ENCODE measurements at regions of chr17 and their contacts with region 1.

Region 1: GRCh38 chr17:3859940-3860339 is 13.9 kb upstream of the NCBP3 start:
- DNase-seq: no peak
- H3K4me3 ChIP-seq: no peak overlapping the region
- H3K27ac ChIP-seq: no peak overlapping the region
- H3K4me1 ChIP-seq: peaks cover 4% of the 10 kb centered on the region in 2 donors
- H3K27me3 ChIP-seq: no peaks in the 10 kb centered on the region
- CTCF ChIP-seq: no peak
- POLR2A ChIP-seq: no peak

Region 2: GRCh38 chr17:3788200-3788599 is 71.7 kb before region 1 on chr17:
- intact Hi-C with region 1: no loop called
- DNase-seq: peak in 1 of 7 donors; percentile 11
- H3K4me3 ChIP-seq: no peak overlapping the region
- H3K27ac ChIP-seq: no peak overlapping the region
- H3K4me1 ChIP-seq: no peaks in the 10 kb centered on the region
- H3K27me3 ChIP-seq: no peaks in the 10 kb centered on the region
- CTCF ChIP-seq: no peak
- POLR2A ChIP-seq: no peak

Region 3: GRCh38 chr17:3907483-3908216 is 47.7 kb after region 1 on chr17:
- intact Hi-C with region 1: loop called in 1 of 2 experiments (anchors 5 kb)
- DNase-seq: no peak
- H3K4me3 ChIP-seq: no peak overlapping the region
- H3K27ac ChIP-seq: no peak overlapping the region
- H3K4me1 ChIP-seq: peaks cover 4% of the 10 kb centered on the region in 2 donors
- H3K27me3 ChIP-seq: no peaks in the 10 kb centered on the region
- CTCF ChIP-seq: peak in 5 of 6 experiments; percentile 36 to 59 (median 45)
- POLR2A ChIP-seq: no peak

Region 4: GRCh38 chr17:3927628-3928340 is 67.8 kb after region 1 on chr17:
- intact Hi-C with region 1: no loop called
- DNase-seq: no peak
- H3K4me3 ChIP-seq: no peak overlapping the region
- H3K27ac ChIP-seq: no peak overlapping the region
- H3K4me1 ChIP-seq: no peaks in the 10 kb centered on the region
- H3K27me3 ChIP-seq: no peaks in the 10 kb centered on the region
- CTCF ChIP-seq: no peak
- POLR2A ChIP-seq: no peak